ENCODE measurements at regions of chr6 and their contacts with region 1.

Region 1: DNA sequence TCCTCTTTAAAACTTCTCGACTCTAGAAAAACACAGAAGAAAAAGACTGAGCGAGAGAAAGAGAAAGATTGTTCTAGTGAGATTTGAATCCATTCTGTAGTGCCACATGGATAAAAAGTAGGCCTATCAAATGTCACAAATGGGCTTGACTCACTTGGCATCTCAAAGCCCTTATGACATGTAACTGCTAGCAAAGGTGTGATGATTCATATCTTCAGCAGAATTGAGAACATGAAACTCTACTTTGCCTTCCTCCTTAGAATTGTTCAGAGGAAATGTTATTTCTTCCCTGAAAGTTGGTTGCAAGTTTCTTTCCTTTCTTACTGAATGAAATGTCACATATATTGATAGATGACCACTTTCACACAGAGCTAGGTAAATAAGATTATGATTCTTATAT is 40.4 kb upstream of the DUSP22 start:
- DNase-seq: no peak
- H3K4me3 Mint-ChIP-seq: no peak overlapping the region
- H3K27ac Mint-ChIP-seq: peak overlapping the region; percentile 56
- H3K4me1 Mint-ChIP-seq: peaks cover 34% of the 10 kb centered on the region
- H3K27me3 Mint-ChIP-seq: peaks cover 2% of the 10 kb centered on the region

Region 2: GRCh38 chr6:235763-236360 is 16.1 kb before region 1 on chr6:
- intact Hi-C with region 1: loop called (anchors 1 kb)
- DNase-seq: peak; percentile 37
- H3K4me3 Mint-ChIP-seq: peak overlapping the region; percentile 60
- H3K27ac Mint-ChIP-seq: peak overlapping the region; percentile 82
- H3K4me1 Mint-ChIP-seq: peaks cover 43% of the 10 kb centered on the region
- H3K27me3 Mint-ChIP-seq: no peaks in the 10 kb centered on the region

Region 3: DNA sequence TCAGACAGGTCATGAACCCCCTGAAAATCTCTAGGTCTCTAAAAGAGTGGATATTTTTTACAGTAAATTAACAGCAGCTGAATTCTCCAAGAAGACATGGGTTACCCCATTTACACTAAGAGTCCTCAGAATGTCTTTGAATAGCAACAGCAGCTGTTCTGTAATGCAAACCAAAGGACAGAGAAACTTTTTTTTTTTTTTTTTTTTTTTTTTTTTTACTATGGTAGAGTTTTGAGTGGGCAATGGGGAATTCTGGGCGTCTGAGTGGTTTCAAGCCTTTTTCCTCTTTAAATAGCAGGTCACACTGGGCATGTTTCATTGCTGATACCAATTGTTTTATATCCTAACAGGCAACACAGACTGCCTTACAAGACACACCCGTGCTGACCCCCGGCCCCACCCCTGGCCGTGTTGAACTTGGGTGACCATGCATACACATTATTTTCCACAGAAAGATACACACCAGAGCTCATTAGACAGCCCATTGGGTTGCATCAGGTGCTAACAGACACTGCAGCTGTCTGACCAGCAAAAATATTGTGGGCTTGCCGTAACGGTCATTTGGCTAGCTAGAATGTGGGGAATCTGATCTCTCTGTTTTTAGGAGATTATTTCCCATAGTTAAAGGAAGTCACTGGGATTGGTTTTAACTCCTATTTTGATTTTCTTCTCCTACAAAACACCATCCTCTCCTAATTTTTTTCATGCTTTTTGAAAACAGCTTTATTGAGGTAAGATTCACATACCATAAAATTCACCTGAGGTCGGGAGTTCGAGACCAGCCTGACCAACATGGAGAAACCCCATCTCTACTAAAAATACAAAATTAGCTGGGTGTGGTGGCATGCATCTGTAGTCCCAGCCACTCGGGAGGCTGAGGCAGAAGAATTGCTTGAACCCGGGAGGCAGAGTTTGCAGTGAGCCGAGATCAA is 113.0 kb after region 1 on chr6:
- intact Hi-C with region 1: no loop called
- DNase-seq: no peak
- H3K4me3 Mint-ChIP-seq: no peak overlapping the region
- H3K27ac Mint-ChIP-seq: no peak overlapping the region
- H3K4me1 Mint-ChIP-seq: no peaks in the 10 kb centered on the region
- H3K27me3 Mint-ChIP-seq: peaks cover 11% of the 10 kb centered on the region